Activated B cell treated with CpG ODN at 0.5 μM for 24 hours (primary cell): ENCODE measurements at regions of chr1 and their contacts with region 1.

Region 1: GRCh38 chr1:90045853-90046563 is 51.1 kb downstream of the ZNF326 start:
- DNase-seq: no peak
- ATAC-seq: no peak
- H3K4me3 Mint-ChIP-seq: no peak overlapping the region
- H3K27ac Mint-ChIP-seq: no peak overlapping the region
- H3K4me1 Mint-ChIP-seq: no peaks in the 10 kb centered on the region
- H3K27me3 Mint-ChIP-seq: no peaks in the 10 kb centered on the region
- CTCF ChIP-seq: no peak

Region 2: DNA sequence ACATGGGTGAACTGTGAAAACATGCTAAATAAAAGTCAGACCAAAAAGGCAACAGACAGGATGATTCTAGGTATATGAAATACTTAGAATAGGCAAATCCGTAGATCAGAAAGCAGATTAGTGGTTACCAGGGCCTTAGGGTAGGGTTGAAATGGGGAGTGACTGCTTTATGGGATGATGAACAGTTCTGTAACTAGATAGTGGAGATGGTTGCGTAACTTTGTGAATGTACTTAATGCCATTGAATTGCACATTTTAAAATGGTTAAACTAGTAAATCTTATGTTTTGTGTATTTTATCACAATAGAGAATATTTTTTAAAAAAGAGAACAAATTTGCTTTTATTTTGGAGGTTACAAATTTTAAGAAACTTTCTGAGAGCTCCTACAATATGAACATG is 33.7 kb before region 1 on chr1:
- CTCF ChIA-PET with region 1: no interaction called
- POLR2A ChIA-PET with region 1: no interaction called
- intact Hi-C with region 1: no loop called
- DNase-seq: no peak
- ATAC-seq: no peak
- H3K4me3 Mint-ChIP-seq: no peak overlapping the region
- H3K27ac Mint-ChIP-seq: no peak overlapping the region
- H3K4me1 Mint-ChIP-seq: peaks cover 2% of the 10 kb centered on the region
- H3K27me3 Mint-ChIP-seq: no peaks in the 10 kb centered on the region
- CTCF ChIP-seq: no peak

Region 3: GRCh38 chr1:91929250-91929649 is 1883.2 kb after region 1 on chr1:
- CTCF ChIA-PET with region 1: no interaction called
- POLR2A ChIA-PET with region 1: no interaction called
- intact Hi-C with region 1: loop called (anchors 5 kb)
- DNase-seq: no peak
- ATAC-seq: no peak
- H3K4me3 Mint-ChIP-seq: no peak overlapping the region
- H3K27ac Mint-ChIP-seq: no peak overlapping the region
- H3K4me1 Mint-ChIP-seq: no peaks in the 10 kb centered on the region
- H3K27me3 Mint-ChIP-seq: no peaks in the 10 kb centered on the region
- CTCF ChIP-seq: no peak